ENCODE measurements at regions of chr14 and their contacts with region 1.

Region 1: GRCh38 chr14:23478111-23478759 is 8.7 kb downstream of the NGDN start:
- DNase-seq: peak; percentile 44
- ATAC-seq: peak; percentile 51

Region 2: DNA sequence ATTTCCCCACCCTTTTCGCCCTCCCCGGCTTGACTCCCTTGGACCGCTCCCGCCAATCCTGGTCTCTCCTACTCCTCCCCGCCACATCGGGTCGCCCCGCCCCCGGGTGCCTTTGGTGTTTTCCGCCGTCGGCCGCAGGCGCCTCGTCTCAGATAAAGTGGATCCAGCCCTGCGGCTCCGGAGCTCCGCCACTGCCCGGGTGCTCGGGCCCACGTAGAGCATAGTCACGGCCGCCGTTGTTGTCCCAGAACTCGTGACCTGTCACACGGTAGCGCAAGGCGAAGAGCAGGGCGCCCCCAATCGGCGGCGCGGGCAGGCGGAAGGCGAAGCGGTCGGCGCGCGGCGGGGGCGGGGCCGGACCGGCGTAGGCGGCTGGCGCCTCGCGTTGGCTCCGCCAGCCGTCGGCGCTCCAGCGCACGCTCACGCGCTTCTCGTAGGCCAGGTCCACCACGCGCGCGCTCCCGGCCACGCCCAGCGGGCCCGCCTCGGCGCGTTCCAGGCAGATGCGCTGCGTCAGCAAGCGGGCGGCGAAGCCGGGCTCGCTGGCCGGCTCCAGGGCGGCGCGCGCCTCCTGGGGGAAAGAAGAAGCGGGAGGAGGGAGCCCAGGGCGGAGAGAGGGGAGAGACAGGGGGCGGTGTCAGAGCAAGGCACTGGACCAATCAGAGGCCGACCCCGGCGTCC is 176.8 kb before region 1 on chr14:
- intact Hi-C with region 1: no loop called
- DNase-seq: peak; percentile 100
- ATAC-seq: peak; percentile 84

Region 3: GRCh38 chr14:23518709-23519108 is 40.5 kb after region 1 on chr14:
- intact Hi-C with region 1: no loop called
- DNase-seq: no peak
- ATAC-seq: no peak

Region 4: DNA sequence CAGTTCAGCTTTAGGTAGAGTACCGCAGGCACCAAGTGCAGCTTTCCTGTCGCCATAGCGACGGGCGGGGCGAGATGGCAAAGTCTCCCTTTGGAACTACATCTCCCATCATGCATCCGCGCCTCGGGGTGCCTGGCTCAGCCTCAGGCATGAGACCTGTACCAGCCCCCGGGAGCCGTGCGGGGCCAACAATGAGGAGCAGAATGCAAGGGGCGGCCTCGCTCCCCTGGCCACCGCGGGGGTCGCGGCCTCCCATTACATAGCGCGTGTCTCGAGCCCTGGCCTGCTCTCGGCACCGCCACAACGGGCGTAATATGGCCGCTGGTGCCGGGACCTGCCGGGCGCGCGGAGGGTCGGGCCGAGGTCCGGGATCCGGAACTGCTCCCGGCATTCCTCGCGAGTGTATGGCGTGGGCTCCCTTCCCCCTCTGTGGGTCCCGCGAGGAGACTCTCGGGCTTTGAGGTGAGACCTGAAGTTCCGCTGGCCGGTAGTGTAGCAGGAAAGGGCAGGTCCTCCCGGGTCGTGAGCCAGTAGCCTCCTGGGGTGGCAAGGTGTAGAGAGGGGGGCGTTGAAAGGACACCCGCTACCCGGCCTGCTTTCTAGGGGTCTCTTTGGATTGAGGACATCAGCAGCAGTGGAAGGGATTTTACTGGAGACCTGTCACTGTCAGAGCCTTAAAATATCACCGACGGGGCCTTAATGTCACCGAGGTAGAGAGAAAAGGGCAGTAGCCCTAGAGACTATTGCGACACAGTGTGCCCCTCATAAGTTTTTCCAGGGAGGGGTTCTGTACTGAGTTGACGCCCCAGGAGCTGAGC is 77.9 kb after region 1 on chr14 and contains the start of gene THTPA:
- intact Hi-C with region 1: loop called (anchors 5 kb)
- DNase-seq: peak; percentile 97
- ATAC-seq: peak; percentile 94
- total RNA-seq, gene THTPA: 20.2 TPM